A673 (cell line): ENCODE measurements at regions of chr4 and their contacts with region 1.

Region 1: DNA sequence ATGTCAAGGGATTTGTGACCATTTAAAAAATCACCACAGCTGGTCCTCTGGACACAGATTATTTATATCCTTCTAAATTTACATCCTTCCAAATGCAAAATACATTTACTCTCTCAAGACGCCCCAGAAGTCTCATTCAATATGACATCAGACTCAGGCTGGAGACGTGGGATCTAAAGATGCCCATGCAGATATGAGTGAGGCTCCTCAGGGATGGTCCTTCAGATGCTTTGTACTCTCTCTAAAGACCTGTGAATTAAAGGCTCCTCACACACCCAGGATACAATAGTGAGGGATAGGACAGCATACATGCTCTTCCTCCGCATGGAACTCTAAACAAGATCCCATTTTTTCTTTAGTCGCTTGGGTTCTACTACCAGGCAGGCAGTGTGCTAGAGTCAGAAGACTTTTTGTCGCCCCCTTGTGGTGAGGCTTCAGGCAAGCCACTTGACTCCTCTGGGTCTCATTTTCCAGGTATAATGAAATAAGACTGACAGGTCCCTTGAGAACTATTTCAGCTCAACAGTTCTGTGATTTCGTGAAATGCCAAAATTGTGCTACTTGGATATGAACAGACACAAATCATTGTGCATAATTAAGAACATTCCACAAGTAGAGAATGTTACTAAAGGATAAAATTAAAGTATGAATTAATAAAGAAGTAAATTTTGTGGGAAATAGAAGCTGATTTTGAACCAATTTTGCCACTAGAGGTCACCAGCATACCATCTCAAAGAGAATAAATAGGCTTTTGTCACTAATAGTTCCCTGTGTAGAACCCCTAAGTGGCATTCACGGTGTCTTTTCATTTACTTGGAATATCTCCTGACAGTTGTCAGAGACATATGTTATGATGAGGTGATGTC is 13.7 kb upstream of the SCOC start:
- DNase-seq: peak; percentile 92
- H3K4me3 ChIP-seq: no peak overlapping the region
- H3K27ac ChIP-seq: no peak overlapping the region
- H3K4me1 ChIP-seq: peaks cover 12% of the 10 kb centered on the region
- H3K27me3 ChIP-seq: peaks cover 20% of the 10 kb centered on the region
- CTCF ChIP-seq: peak; percentile 92

Region 2: GRCh38 chr4:139734875-139735380 is 624.9 kb before region 1 on chr4:
- CTCF ChIA-PET with region 1: interaction called, 7 read pairs
- POLR2A ChIA-PET with region 1: no interaction called
- intact Hi-C with region 1: loop called (anchors 10 kb)
- DNase-seq: peak; percentile 84
- H3K4me3 ChIP-seq: peak overlapping the region; percentile 41
- H3K27ac ChIP-seq: peak overlapping the region; percentile 2
- H3K4me1 ChIP-seq: peaks cover 13% of the 10 kb centered on the region
- H3K27me3 ChIP-seq: no peaks in the 10 kb centered on the region
- CTCF ChIP-seq: peak; percentile 75

Region 3: DNA sequence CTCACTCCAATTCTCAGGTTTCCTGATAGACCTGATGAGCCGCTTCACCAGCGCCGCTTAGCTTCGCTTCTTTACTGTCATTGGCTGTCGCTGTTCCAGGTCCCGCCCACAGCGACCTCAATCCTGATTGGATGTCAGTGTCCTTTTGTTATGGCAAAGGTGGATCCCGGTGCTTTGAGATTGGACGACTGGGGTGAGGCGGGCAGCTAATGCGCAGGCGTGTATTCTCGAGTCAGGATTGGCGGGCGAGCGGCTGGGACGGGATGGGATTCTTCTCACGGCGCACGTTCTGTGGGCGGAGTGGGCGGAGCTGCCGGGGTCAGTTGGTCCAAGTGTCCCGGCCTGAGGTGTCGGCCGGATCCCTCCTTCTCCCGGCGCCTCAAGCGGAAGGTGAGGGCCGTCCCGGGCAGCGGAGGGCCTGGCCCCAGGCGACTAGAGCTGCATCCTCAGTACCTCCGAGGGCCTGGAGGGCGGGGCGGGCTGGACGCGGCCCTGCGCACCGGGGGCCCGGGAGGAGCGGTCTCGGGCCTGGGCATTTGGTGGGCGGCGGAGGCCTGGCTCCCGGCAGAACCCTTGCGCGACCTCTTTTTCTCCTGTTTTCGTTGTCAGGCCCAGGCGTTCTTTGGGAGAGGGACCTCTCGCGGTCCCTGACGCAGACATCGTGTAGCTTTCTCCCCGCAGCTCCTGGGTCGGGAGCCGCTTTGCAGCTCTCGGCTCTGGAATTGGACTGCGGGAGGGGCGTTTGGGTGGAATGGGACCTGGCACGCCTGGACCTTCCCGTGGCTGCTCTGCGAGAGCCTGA is 13.7 kb after region 1 on chr4 and contains the start of gene SCOC:
- CTCF ChIA-PET with region 1: interaction called, 11 read pairs
- POLR2A ChIA-PET with region 1: no interaction called
- intact Hi-C with region 1: no loop called
- DNase-seq: peak; percentile 99
- H3K4me3 ChIP-seq: peak within 1 kb of the TSS; percentile 95
- H3K27ac ChIP-seq: peak within 1 kb of the TSS; percentile 82
- H3K4me1 ChIP-seq: peaks cover 14% of the 10 kb centered on the region
- H3K27me3 ChIP-seq: peaks cover 5% of the 10 kb centered on the region
- CTCF ChIP-seq: no peak
- total RNA-seq, gene SCOC: 44.2 and 44.7 TPM in 2 replicates

Region 4: GRCh38 chr4:140609548-140610425 is 250.0 kb after region 1 on chr4:
- CTCF ChIA-PET with region 1: interaction called, 14 read pairs
- POLR2A ChIA-PET with region 1: no interaction called
- intact Hi-C with region 1: loop called (anchors 2 kb)
- DNase-seq: peak; percentile 76
- H3K4me3 ChIP-seq: no peak overlapping the region
- H3K27ac ChIP-seq: no peak overlapping the region
- H3K4me1 ChIP-seq: peaks cover 4% of the 10 kb centered on the region
- H3K27me3 ChIP-seq: no peaks in the 10 kb centered on the region
- CTCF ChIP-seq: peak; percentile 56

Region 5: DNA sequence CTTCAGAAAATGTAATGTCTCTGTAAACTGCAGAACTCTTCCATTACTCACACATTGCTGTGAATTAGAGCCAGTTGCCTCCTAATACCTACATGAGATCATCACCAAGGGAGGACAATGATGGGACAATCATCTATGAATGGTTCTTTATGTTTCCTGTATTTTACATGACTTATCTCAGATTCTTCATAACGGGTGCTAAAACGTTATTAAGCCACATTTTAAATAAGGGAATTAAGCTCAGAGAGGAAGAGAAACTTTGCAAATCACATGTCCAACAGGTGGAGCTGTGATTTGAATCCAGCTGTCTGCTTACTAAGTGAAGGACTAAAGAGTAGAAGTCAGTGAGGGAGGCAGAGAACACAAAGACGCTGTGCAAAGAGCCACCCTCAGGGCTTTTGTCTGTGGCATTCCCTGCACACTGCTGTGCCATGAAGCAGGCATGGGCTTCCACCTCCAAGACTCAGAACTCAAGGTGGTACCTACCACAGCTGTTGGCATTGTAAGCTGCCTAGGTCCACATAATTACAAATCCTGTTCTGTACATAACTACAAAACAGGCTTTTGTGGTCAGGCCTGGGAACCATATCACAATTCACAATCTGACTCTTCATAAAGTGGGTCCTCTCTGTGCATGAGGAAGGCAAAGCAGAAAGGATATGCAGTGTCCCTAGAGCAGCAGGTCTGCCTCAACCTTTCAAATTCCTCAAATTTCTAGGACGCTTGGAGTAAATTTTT is 383.6 kb after region 1 on chr4:
- CTCF ChIA-PET with region 1: no interaction called
- POLR2A ChIA-PET with region 1: no interaction called
- intact Hi-C with region 1: no loop called
- DNase-seq: peak; percentile 70
- H3K4me3 ChIP-seq: no peak overlapping the region
- H3K27ac ChIP-seq: peak overlapping the region; percentile 57
- H3K4me1 ChIP-seq: peaks cover 14% of the 10 kb centered on the region
- H3K27me3 ChIP-seq: no peaks in the 10 kb centered on the region
- CTCF ChIP-seq: peak; percentile 58

Region 6: GRCh38 chr4:140851032-140851636 is 491.3 kb after region 1 on chr4:
- CTCF ChIA-PET with region 1: interaction called, 4 read pairs
- POLR2A ChIA-PET with region 1: no interaction called
- intact Hi-C with region 1: loop called (anchors 1 kb)
- DNase-seq: peak; percentile 84
- H3K4me3 ChIP-seq: no peak overlapping the region
- H3K27ac ChIP-seq: no peak overlapping the region
- H3K4me1 ChIP-seq: no peaks in the 10 kb centered on the region
- H3K27me3 ChIP-seq: no peaks in the 10 kb centered on the region
- CTCF ChIP-seq: peak; percentile 81